GM13977 (cell line): ENCODE measurements at regions of chr3 and their contacts with region 1.

Region 1: DNA sequence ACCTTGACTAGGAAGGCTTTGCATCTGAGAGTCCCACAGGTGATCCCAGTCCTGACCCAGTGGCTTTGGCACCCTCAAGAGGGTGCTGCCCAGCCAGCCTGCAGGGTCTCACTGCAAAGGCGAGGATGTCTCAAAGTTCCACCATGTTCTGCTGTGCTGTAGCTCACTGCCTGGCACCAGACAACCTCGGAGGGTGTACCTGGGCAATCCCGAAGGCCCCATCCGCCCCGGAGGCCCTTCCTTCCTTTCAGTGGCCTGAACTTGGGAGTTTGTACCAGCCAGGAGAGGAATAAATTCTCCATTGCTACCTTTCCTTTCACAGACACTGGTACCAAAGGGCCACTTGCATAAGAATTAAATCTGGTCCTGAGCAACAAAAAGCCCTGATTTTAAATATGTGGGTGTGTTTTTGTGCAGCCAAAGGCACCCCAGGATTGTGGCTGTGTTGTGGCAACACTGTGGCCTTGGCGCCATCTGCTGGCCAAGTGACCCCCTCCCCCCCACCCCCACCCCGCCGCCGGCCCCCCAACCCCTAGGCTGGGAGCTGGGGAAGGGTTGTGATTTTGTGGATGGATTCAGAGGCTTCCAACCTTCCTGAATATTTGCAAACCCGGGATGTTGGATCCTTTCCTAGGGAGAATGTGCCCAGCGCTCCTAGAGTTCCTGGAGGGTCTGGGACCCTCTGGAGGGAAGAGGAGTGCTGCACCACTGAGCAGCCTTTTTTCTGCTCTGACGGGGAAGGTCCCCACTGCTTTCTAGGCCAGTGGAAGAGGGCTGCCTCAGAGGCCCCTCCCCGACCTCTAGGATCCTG is 9.7 kb upstream of the PTPN23 start:
- DNase-seq: peak; percentile 73
- CTCF ChIP-seq: peak; percentile 45

Region 2: DNA sequence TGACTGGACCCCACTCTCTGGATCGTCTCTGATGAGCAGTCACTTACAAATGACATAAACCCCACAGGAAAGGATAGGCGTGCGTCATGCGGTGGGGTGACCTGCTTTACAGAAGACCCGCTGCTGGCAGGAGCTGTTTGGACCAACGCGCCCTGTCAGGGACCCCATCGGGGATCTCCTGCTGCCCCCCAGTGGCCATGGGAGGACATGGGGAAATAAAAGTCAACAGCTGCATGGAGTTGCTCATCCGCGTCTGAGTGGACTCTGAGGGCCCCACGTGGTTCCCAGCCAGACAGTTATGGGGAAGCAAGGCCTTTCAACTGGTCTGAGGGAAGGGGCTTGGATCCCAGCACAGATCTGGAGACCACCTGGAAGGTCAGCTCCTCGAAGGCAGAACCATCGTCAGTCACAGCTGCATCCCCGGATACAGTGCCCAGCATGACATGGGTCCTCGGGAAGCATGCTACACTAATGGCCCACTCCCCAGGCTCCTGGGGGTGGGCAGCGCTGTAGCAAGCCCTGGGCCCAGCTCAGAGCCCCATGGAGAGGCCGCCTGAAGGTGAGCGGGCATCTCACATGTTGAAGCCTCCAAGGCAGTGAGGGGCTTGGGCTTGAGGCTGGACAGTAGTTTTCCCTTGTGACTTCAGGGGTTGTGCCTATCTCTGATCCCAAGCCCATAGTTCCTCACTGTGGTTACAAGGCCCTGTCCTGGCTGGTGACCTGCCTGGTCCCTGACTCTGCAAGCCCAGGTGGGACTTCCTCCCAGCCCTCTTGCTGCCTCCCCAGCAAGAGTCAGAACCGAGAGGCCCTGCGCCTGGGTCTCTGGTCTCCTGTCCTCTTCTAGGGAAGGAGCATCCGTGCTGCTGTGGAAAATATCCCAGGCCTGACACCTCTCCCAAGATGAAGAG is 461.3 kb before region 1 on chr3:
- in situ Hi-C with region 1: loop called (anchors 25 kb)
- DNase-seq: peak; percentile 89
- CTCF ChIP-seq: peak; percentile 83

Region 3: DNA sequence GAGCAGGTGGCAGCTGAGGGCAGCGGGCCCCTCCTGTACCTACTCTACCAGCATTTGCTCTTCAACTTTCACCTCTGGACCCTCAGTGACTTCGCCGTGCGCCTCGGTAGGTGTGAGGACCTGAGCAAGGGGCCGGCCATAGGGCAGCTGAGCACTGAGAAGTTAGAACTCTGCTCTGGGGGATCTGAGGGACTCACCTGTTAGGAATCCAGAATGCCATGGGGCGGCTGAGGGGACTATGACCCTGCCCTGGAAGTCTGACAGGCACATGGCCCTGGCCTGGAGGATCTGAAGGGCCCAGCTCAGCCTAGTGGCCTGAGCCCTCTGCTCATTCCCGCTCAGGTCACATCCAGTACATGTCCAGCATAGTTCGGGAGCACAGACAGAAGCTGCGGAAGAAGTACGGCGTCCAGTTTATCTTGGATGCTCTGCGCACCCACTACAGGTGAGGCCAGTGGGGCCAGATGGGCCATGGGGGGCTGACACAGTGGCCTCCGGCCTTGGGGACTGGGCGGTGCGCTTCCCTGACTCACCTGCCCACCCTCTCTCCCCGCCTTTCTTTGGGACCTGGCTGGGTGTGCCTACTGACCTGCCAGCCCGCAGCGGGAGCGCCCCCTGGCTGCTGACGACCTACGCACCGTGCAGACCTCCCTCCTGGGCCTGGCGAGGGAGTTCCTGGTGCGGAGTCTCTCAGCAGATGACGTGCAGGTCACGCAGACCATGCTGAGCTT is 372.8 kb before region 1 on chr3:
- in situ Hi-C with region 1: no loop called
- DNase-seq: peak; percentile 86
- CTCF ChIP-seq: peak; percentile 96